ENCODE measurements at regions of chr2 and their contacts with region 1.

Region 1: DNA sequence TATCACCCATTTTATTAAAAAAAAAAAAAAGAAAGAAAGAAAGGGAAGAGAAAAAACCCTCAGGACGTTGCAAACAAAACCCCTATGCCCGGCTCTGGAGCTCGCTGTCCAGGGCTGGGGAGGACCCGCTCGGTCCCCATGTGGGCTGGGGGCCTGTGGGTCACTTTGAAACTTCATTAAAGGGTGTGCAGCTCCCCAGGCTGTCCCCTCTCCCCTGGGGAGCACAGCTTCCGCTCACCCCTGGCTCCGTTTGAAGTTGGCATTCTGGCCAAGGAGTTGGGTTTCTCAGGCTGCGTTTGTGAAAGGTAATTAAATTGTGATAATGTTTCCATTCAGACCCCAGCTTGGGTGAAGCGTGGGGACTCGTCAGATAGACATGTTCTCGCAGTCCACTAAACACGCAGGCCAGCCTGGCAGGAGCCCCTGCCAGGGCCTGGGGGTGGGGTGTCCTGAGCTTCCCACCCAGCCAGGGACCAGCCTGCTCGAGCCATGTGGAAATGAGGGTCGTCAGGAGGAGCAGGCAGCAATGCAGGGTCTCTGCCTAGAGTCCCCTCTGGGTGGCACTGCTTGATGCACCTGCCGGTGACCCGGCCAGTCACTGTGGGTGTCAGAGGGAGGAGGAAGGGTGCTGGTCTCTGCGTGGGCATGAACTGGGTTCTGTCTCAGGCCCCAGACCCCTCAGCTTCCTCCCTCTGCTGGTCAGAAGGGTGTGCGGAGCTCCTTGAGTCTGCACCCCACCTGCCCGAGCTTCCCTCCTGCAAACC is 166.2 kb downstream of the INHBB start:
- DNase-seq: no peak
- H3K4me3 ChIP-seq: no peak overlapping the region
- H3K27ac ChIP-seq: no peak overlapping the region
- H3K4me1 ChIP-seq: no peaks in the 10 kb centered on the region
- H3K27me3 ChIP-seq: no peaks in the 10 kb centered on the region
- CTCF ChIP-seq: no peak

Region 2: DNA sequence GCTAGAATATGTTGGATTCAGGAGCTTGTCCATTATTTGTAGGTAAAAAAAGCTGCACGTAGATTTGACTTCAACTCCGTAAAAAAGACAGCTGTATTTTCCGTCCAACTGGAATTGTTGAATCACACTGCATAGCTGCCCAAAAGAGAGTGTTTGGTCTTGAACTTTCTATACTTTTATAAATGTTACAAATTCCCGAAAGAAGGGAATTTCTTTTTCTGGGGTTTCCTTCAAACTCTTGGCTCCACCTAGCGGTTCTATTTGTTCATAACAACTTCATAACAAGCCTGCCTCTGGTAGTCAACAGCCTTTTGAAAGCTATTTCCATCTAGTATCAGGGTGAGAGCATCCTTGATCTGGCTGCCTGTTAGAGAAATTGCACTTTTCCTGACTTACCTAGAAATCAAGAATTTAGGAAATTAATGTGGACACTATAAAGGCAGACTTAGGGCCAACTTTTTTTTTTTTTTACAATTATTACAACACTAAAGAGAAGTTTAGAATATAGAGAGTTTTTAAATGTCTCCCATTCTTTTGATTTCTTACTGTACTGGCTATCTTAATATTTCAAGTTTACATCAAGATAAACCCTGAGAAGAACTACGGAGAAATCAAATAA is 337.1 kb before region 1 on chr2:
- CTCF ChIA-PET with region 1: no interaction called
- POLR2A ChIA-PET with region 1: no interaction called
- intact Hi-C with region 1: no loop called
- DNase-seq: peak; percentile 76
- H3K4me3 ChIP-seq: no peak overlapping the region
- H3K27ac ChIP-seq: no peak overlapping the region
- H3K4me1 ChIP-seq: no peaks in the 10 kb centered on the region
- H3K27me3 ChIP-seq: no peaks in the 10 kb centered on the region
- CTCF ChIP-seq: peak; percentile 76

Region 3: DNA sequence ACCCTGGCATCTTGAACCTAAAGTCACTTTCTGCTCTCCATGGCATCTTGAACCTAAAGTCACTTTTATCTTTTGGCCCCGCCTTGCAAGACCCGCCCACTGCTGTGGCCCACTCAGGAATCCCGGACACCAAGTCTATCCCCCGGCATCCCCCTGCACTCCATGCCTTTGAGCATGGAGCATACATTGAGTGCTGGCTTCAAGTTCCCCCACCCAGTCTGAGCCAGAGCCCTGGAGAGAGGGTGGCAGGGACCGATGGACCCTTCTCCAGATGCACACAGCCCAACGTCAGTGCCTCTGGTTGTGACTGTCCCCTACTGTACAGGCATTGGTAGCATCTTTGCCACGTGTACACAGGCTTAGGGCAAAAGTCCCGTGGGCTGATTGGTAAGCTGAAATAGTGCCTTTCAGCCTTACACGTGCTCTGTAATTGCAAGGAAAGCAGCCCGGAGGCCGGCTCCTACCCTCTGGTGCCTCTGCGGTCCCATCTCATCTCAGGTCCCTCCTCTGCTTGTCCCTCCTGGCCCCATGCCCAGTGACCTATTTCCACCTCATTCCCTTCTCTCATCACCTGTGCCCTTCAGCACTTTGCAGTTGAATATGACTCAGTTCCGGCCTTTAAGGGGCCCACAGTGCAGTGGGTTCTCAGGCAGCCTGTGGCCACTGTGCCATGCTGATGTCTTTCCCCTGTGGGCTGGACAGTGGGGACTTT is 12.2 kb before region 1 on chr2:
- CTCF ChIA-PET with region 1: no interaction called
- POLR2A ChIA-PET with region 1: no interaction called
- intact Hi-C with region 1: no loop called
- DNase-seq: no peak
- H3K4me3 ChIP-seq: no peak overlapping the region
- H3K27ac ChIP-seq: no peak overlapping the region
- H3K4me1 ChIP-seq: no peaks in the 10 kb centered on the region
- H3K27me3 ChIP-seq: no peaks in the 10 kb centered on the region
- CTCF ChIP-seq: no peak

Region 4: DNA sequence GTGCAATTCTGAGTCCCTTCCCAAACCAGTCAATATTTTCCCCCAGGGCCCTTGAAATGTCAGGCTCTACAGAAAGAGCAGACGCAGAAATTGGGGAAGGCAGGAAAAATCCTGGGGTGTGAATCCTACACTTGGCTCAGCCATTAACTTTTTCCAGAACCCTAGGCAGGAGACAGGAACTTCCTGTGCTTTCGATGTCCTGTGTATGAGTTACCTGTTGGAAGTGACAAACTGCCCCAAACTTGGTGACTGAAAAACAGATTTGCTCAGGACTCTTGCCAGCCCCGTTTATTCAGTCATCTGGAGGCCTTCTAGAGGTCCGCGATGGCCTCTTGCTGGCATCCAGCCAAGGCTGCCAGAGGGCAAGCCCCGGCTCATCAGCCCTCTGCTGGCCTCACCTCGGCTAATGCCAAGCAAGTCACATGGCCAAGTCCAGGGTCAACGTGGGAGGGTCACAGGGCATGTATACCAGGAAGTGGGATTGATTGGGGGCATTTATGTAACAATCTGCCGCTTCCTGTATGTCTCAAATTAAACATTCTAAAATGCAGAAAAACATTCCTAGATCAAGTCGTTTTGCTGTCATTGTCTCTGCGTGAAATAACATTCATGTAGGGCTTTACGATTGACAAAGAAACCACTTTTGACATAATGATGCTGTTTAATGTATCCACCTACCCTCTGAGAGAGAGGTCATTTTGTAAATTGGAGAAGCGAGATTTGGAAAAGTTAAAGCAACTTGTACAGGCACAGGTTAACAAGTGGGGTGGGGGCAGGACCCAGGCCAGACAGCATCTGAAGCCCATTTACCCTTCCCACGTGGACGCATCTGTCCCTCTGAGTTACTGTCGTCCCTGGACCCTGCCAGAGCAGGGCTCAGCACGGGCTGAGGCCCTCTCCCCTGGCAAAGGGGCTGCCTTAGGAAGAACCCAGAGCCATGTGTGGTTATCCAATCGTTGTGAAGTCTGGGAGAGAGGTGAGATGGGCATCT is 13.2 kb after region 1 on chr2:
- CTCF ChIA-PET with region 1: no interaction called
- POLR2A ChIA-PET with region 1: no interaction called
- intact Hi-C with region 1: no loop called
- DNase-seq: peak; percentile 4
- H3K4me3 ChIP-seq: no peak overlapping the region
- H3K27ac ChIP-seq: no peak overlapping the region
- H3K4me1 ChIP-seq: no peaks in the 10 kb centered on the region
- H3K27me3 ChIP-seq: peaks cover 5% of the 10 kb centered on the region
- CTCF ChIP-seq: no peak

Region 5: GRCh38 chr2:120680136-120680761 is 168.1 kb after region 1 on chr2:
- CTCF ChIA-PET with region 1: interaction called, 17 read pairs
- POLR2A ChIA-PET with region 1: no interaction called
- intact Hi-C with region 1: no loop called
- DNase-seq: peak; percentile 88
- H3K4me3 ChIP-seq: no peak overlapping the region
- H3K27ac ChIP-seq: no peak overlapping the region
- H3K4me1 ChIP-seq: no peaks in the 10 kb centered on the region
- H3K27me3 ChIP-seq: no peaks in the 10 kb centered on the region
- CTCF ChIP-seq: peak; percentile 74